ENCODE measurements at regions of chr7 and their contacts with region 1.

Region 1: DNA sequence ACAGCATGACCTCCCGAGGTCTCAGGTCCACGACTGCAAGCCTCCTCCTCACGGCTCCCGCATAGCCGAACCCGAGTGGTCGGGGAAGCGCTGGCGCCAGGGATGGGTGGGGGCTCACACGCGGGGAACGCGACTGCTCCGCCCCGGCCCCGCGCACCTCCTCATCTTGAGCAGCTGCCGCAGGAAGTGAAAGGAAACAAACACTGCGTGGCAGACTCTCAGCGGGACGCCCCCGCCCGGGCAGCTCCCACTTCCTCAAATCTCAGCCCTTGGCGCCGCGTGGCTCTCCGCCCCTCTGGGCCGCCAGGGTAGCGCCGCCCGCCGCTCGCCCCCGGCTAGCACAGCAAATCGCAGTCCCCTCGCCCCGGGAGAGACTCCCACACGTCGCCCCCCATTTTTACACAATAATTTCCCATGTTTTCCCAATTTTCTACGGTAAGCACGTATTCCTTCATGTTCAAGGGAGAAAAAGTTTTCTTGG is at the start of gene TMEM243:
- DNase-seq: peak; percentile 89
- CTCF ChIP-seq: peak; percentile 47

Region 2: DNA sequence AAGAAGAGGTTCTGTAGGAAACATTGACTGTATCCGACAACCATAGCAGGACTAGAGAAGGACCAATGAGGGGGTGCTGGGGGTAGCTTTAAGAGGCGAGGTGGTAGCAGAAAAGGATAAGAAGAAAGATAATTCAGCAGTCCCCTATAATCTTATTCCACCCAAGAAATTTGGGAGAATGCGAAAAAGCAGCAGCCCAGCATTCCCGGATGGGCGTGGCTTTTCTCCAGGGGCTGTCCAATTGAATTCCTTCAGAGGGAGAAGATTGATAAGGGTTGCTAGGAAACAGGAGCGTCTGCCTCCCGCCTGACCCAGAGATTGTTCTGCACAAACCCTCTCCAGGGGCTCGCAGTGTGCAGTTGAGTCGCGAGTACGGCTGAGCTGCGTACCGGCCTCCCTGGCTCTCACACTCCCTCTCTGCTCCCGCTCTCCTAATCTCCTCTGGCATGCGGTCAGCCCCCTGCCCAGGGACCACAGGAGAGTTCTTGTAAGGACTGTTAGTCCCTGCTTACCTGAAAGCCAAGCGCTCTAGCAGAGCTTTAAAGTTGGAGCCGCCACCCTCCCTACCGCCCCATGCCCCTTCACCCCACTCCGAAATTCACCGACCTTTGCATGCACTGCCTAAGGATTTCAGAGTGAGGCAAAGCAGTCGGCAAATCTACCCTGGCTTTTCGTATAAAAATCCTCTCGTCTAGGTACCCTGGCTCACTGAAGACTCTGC is 575.9 kb before region 1 on chr7 and contains the start of gene GRM3:
- in situ Hi-C with region 1: no loop called
- DNase-seq: peak; percentile 37
- CTCF ChIP-seq: no peak

Region 3: GRCh38 chr7:87159538-87159937 is 60.0 kb before region 1 on chr7:
- in situ Hi-C with region 1: loop called (anchors 5 kb)
- DNase-seq: no peak
- CTCF ChIP-seq: no peak

Measured in GM13976 (cell line).